Posterior cingulate gyrus (tissue), 11 donors: ENCODE measurements at regions of chr3 and their contacts with region 1.

Region 1: GRCh38 chr3:65230256-65231139 is 542.7 kb upstream of the ADAMTS9 start:
- DNase-seq: peak in 1 of 10 donors; percentile 62

Region 2: GRCh38 chr3:65118912-65119499 is 111.5 kb before region 1 on chr3:
- intact Hi-C with region 1: no loop called
- DNase-seq: no peak

Region 3: GRCh38 chr3:65201926-65202325 is 28.6 kb before region 1 on chr3:
- intact Hi-C with region 1: loop called (anchors 1 kb)
- DNase-seq: no peak